Common myeloid progenitor, CD34-positive (primary cell): ENCODE measurements at regions of chr6 and their contacts with region 1.

Region 1: DNA sequence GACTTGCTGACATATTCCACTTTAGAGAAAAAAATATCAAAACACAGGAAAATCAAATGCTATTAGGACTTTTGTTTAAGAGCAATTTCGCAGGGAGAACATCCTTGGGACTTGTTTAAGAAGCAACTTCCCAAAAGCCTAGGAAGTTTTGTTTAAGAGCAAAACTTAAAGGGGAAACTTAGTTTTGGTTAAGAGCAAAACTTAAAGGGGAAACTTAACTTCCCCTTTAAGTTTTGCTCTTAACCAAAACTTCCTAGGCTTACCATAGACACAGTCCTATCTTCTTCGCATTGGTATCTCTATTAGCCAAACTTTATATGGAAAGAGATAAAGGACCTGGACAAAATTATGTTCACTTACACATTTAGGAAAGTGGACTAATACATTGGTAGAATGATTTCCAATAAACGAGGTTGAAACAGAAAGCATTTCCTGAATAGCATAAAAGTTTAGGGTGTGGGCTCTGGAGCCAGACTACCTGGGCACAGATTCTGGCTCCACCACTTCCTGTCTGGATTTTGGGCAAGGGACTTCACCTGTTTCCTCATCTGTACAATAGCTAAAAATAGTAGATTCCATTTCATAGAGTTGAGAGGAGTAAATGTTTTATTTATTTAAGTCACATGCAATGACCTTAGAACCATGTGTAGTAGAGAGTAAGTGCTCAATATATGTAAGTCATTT is 15.7 kb downstream of the PAQR8 start:
- DNase-seq: peak in 1 of 3 donors; percentile 57
- H3K4me3 ChIP-seq: peak overlapping the region in 3 of 7 experiments; percentile 12 to 42 (median 39)
- H3K27ac ChIP-seq: peak overlapping the region in 1 of 2 experiments; percentile 0
- H3K4me1 ChIP-seq: peaks cover 4 to 18% (median 10%) of the 10 kb centered on the region in 4 experiments
- H3K27me3 ChIP-seq: no peaks in the 10 kb centered on the region

Region 2: GRCh38 chr6:52190409-52190808 is 187.3 kb before region 1 on chr6:
- CTCF ChIA-PET with region 1: no interaction called
- POLR2A ChIA-PET with region 1: no interaction called
- DNase-seq: no peak
- H3K4me3 ChIP-seq: no peak overlapping the region
- H3K27ac ChIP-seq: no peak overlapping the region
- H3K4me1 ChIP-seq: no peaks in the 10 kb centered on the region
- H3K27me3 ChIP-seq: no peaks in the 10 kb centered on the region

Region 3: GRCh38 chr6:52361945-52362442 is 15.7 kb before region 1 on chr6 and contains the start of gene PAQR8:
- CTCF ChIA-PET with region 1: interaction called, 16 read pairs
- POLR2A ChIA-PET with region 1: no interaction called
- DNase-seq: peak; percentile 80 to 90 (median 88)
- H3K4me3 ChIP-seq: peak within 1 kb of the TSS; percentile 81 to 97 (median 87)
- H3K27ac ChIP-seq: peak within 1 kb of the TSS; percentile 42 to 78
- H3K4me1 ChIP-seq: peaks cover 5 to 22% (median 19%) of the 10 kb centered on the region in 4 experiments
- H3K27me3 ChIP-seq: no peaks in the 10 kb centered on the region

Region 4: DNA sequence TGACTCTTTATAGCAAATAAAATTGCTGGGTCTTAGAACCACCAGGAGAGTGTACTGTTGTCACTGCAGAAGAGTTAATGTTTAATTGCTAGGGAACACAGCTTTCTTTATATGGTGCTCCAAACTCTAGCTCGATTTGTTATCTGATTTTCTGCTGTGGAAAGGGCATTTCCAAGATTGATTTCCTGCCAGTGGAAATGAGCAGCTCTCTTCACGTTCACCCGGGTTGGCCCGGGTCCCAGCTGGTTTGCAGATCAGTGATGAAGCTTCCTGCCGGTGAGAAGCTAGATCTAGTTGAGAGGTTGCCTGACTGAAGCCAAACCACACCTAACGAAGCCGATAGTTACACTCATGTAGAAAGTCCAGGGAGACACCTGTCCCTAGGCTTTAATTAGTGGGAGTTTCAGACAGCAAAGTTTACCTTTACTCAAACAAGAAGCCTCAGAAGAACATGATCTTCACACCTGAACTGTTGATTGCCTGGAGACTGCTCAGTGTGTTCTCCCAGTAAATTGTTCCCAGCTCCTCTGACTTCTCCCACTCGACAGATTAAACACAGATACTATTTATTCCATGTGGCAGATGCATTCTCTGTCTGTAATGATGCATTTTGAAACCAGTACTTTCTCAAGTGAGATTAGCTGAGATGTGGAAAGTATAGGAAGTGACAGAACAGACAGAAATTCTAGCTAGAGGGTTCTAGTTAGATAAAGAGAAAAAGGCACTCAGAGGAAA is 12.1 kb after region 1 on chr6:
- CTCF ChIA-PET with region 1: interaction called, 14 read pairs
- POLR2A ChIA-PET with region 1: no interaction called
- DNase-seq: peak; percentile 52 to 79 (median 70)
- H3K4me3 ChIP-seq: peak overlapping the region in 5 of 7 experiments; percentile 30 to 59 (median 46)
- H3K27ac ChIP-seq: peak overlapping the region; percentile 70 to 81
- H3K4me1 ChIP-seq: peaks cover 13 to 35% (median 27%) of the 10 kb centered on the region in 4 experiments
- H3K27me3 ChIP-seq: no peaks in the 10 kb centered on the region

Region 5: GRCh38 chr6:52522151-52522626 is 144.5 kb after region 1 on chr6:
- CTCF ChIA-PET with region 1: no interaction called
- POLR2A ChIA-PET with region 1: no interaction called
- DNase-seq: no peak
- H3K4me3 ChIP-seq: no peak overlapping the region
- H3K27ac ChIP-seq: no peak overlapping the region
- H3K4me1 ChIP-seq: no peaks in the 10 kb centered on the region
- H3K27me3 ChIP-seq: no peaks in the 10 kb centered on the region